ENCODE measurements at regions of chr20 and their contacts with region 1.

Region 1: DNA sequence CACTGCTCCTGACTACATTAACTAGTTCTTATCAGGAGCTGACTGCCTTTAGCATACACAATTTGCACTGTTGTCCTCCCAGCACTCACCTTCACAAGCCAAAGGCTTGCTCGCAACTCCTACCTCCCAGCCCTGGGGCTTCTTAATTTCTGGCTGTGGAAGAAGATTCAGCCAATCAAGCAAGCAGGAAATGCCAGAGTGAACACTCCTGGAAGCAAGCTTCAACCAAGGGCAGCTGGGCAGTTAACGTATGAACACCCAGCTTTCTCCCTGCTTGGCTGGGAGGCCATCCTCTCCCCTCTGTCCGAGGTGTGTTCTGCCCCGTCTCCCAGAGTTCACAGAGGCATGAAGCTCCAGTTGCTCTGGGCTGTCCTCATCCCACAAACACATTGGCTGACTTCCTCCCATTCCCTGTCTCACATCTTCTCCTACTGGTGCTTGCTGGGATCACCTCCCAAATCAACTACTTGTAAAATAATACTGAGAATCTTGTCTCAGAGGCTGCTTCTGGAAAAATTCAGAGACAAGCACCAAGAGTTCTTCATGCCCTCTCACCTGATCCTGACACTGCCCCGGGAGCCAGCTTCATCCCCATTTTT is 15.3 kb upstream of the SRSF6 start:
- DNase-seq: no peak
- ATAC-seq: no peak
- H3K4me3 Mint-ChIP-seq: no peak overlapping the region
- H3K27ac Mint-ChIP-seq: no peak overlapping the region
- H3K4me1 Mint-ChIP-seq: peaks cover 0 to 14% (median 11%) of the 10 kb centered on the region in 4 donors
- H3K27me3 Mint-ChIP-seq: peaks cover 3 to 21% (median 10%) of the 10 kb centered on the region in 5 donors

Region 2: DNA sequence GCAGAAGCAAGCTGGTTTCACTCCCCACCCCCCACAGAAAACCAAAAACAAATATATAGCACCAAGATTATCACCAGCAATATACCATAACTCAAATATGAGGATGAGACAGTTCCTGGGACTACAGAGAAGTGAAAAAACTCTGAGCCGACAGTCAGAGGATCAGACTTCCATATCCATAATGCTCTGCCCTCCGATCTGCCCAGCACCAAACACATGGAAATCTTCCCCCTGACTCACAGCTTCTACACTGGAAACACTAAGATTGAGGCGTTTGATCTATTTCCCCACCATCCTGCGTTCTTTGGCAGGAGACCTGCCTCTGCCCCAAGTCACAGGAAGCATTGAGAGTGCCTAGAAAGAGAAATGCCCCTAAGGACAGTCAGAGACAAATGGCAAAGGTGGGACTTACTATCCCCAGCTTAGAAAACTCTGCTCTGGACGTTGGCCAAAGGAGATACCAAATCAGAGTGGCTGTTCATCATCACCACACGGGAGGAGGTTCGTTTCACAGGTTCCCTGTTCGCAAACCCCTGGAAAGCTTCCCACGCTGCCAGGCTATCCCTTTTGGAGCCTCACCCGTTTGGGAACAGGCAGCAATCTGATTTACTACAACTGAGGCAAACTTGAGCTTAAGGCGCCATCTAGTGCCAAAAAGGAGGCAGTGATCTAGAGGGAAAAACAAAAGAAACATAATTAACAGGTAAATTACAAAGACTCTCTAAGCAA is 33.4 kb before region 1 on chr20:
- POLR2A ChIA-PET with region 1: no interaction called
- DNase-seq: no peak
- ATAC-seq: no peak
- H3K4me3 Mint-ChIP-seq: no peak overlapping the region
- H3K27ac Mint-ChIP-seq: no peak overlapping the region
- H3K4me1 Mint-ChIP-seq: no peaks in the 10 kb centered on the region
- H3K27me3 Mint-ChIP-seq: peaks cover 38 to 78% (median 57%) of the 10 kb centered on the region in 5 donors

Region 3: GRCh38 chr20:43525021-43525420 is 82.6 kb after region 1 on chr20:
- POLR2A ChIA-PET with region 1: interaction called, 13 read pairs
- DNase-seq: no peak
- ATAC-seq: no peak
- H3K4me3 Mint-ChIP-seq: no peak overlapping the region
- H3K27ac Mint-ChIP-seq: no peak overlapping the region
- H3K4me1 Mint-ChIP-seq: peaks cover 0 to 6% (median 0%) of the 10 kb centered on the region in 4 donors
- H3K27me3 Mint-ChIP-seq: peaks cover 0 to 4% (median 3%) of the 10 kb centered on the region in 5 donors

Measured in naive thymus-derived CD8-positive, alpha-beta T cell (primary cell).